ENCODE measurements at regions of chr9 and their contacts with region 1.

Region 1: GRCh38 chr9:73149371-73150067 is 2.1 kb upstream of the ANXA1 start:
- DNase-seq: peak; percentile 23
- H3K4me3 Mint-ChIP-seq: peak overlapping the region; percentile 28
- H3K27ac Mint-ChIP-seq: peak overlapping the region; percentile 79
- H3K4me1 Mint-ChIP-seq: peaks cover 55% of the 10 kb centered on the region
- H3K27me3 Mint-ChIP-seq: no peaks in the 10 kb centered on the region

Region 2: GRCh38 chr9:72473474-72474261 is 675.9 kb before region 1 on chr9:
- CTCF ChIA-PET with region 1: no interaction called
- intact Hi-C with region 1: loop called (anchors 5 kb)
- DNase-seq: no peak
- H3K4me3 Mint-ChIP-seq: no peak overlapping the region
- H3K27ac Mint-ChIP-seq: peak overlapping the region; percentile 84
- H3K4me1 Mint-ChIP-seq: peaks cover 42% of the 10 kb centered on the region
- H3K27me3 Mint-ChIP-seq: no peaks in the 10 kb centered on the region

Region 3: DNA sequence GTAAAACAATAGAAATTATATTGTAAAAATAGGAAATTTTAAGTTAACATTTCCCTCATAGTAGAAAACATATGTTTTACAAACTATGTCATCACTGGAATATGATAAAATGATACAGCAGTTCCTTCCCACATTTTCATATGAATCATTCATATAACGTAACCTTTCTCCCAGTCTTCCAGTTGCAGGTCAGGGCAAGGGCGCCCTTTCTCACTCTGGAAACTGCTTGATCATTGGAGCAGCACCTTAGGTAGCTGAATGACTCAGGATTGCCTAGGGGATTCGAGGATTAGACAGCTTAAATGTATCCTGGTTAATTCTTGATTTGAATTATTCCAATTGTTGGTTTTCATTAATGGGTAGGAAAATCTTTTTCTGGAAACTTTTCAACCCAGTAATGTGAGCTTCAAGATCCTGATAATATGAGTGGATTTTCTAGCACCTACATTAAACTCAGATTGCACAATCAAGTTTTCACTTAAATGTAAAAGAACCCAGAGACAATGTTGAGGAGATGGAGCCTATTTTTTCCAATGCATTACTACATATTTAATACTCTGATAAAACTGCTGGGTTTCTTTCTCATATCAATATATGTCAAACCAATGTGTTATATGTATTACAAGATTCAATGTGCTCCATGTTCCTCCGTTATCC is 30.5 kb before region 1 on chr9:
- CTCF ChIA-PET with region 1: no interaction called
- intact Hi-C with region 1: loop called (anchors 1 kb)
- DNase-seq: no peak
- H3K4me3 Mint-ChIP-seq: no peak overlapping the region
- H3K27ac Mint-ChIP-seq: no peak overlapping the region
- H3K4me1 Mint-ChIP-seq: peaks cover 34% of the 10 kb centered on the region
- H3K27me3 Mint-ChIP-seq: no peaks in the 10 kb centered on the region

Region 4: GRCh38 chr9:73183917-73184861 is 34.7 kb after region 1 on chr9:
- CTCF ChIA-PET with region 1: interaction called, 3 read pairs
- intact Hi-C with region 1: loop called (anchors 2 kb)
- DNase-seq: no peak
- H3K4me3 Mint-ChIP-seq: no peak overlapping the region
- H3K27ac Mint-ChIP-seq: no peak overlapping the region
- H3K4me1 Mint-ChIP-seq: peaks cover 6% of the 10 kb centered on the region
- H3K27me3 Mint-ChIP-seq: peaks cover 2% of the 10 kb centered on the region

Region 5: DNA sequence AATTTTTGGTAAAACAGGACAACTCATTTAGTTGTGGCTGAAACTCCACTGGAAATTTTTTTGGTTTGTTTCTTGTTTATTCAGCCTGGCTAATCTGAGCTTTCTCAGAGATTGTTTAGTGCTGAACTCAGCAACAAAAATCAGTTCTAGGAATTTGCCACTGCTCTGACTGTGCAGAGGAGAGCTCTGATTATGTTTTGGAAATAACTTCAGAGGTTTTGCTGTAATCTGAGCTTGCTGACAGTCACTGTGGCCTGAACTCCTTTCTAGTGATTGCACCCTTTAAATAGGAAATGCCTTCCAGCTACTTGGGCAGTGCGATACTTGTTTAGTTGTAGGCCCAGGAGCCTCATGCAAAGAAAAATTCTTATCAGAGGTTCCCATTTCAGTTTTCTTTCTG is 1999.0 kb after region 1 on chr9:
- CTCF ChIA-PET with region 1: no interaction called
- intact Hi-C with region 1: loop called (anchors 10 kb)
- DNase-seq: peak; percentile 32
- H3K4me3 Mint-ChIP-seq: no peak overlapping the region
- H3K27ac Mint-ChIP-seq: peak overlapping the region; percentile 83
- H3K4me1 Mint-ChIP-seq: peaks cover 64% of the 10 kb centered on the region
- H3K27me3 Mint-ChIP-seq: no peaks in the 10 kb centered on the region

Measured in activated naive CD4-positive, alpha-beta T cell treated with anti-CD3 and anti-CD28 coated beads for 36 hours (primary cell).